Activated naive CD4-positive, alpha-beta T cell treated with anti-CD3 and anti-CD28 coated beads for 36 hours (primary cell): ENCODE measurements at regions of chr5 and their contacts with region 1.

Region 1: GRCh38 chr5:14664302-14665100 is at the start of gene OTULIN:
- DNase-seq: peak; percentile 94
- H3K4me3 Mint-ChIP-seq: peak within 1 kb of the TSS; percentile 96
- H3K27ac Mint-ChIP-seq: peak within 1 kb of the TSS; percentile 97
- H3K4me1 Mint-ChIP-seq: peaks cover 70% of the 10 kb centered on the region
- H3K27me3 Mint-ChIP-seq: no peaks in the 10 kb centered on the region
- total RNA-seq, gene OTULIN: 46.4 to 48.0 TPM

Region 2: DNA sequence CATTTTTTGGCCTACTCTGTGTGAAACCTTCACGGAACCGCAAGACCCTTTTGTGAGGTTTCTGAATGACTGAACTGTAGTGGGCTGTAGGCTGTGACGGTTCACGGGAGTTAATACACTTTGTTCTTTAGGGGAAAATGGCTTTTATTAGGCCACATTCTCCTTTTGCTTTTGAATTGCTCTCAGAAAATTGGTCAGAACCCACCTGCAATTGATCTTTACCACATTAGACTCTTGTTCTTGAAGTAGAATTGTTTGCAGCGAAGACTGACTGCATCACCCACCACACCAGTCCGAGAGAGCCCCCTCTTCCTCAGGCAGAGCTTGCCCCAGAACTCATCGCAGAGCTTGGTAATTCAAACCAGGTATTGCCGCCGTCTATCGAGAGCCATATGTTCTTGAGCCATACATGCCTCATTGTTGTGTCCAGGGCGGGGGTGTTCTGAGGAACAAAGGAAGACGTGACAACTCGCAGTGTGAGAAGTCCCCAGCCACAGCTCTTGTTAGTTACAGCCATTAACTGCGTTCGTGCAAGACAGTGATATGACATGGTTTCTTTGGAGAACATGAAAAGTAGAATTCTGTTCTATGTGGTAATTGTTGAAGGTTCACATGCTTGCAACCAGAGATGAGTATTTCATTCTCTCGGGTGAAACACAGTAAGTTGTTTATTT is 249.3 kb before region 1 on chr5:
- CTCF ChIA-PET with region 1: no interaction called
- intact Hi-C with region 1: loop called (anchors 1 kb)
- DNase-seq: peak; percentile 43
- H3K4me3 Mint-ChIP-seq: peak overlapping the region; percentile 51
- H3K27ac Mint-ChIP-seq: peak overlapping the region; percentile 84
- H3K4me1 Mint-ChIP-seq: peaks cover 50% of the 10 kb centered on the region
- H3K27me3 Mint-ChIP-seq: peaks cover 2% of the 10 kb centered on the region

Region 3: GRCh38 chr5:14595189-14595588 is 69.3 kb before region 1 on chr5:
- CTCF ChIA-PET with region 1: no interaction called
- intact Hi-C with region 1: loop called (anchors 2 kb)
- DNase-seq: peak; percentile 51
- H3K4me3 Mint-ChIP-seq: peak overlapping the region; percentile 68
- H3K27ac Mint-ChIP-seq: peak overlapping the region; percentile 90
- H3K4me1 Mint-ChIP-seq: peaks cover 84% of the 10 kb centered on the region
- H3K27me3 Mint-ChIP-seq: no peaks in the 10 kb centered on the region

Region 4: DNA sequence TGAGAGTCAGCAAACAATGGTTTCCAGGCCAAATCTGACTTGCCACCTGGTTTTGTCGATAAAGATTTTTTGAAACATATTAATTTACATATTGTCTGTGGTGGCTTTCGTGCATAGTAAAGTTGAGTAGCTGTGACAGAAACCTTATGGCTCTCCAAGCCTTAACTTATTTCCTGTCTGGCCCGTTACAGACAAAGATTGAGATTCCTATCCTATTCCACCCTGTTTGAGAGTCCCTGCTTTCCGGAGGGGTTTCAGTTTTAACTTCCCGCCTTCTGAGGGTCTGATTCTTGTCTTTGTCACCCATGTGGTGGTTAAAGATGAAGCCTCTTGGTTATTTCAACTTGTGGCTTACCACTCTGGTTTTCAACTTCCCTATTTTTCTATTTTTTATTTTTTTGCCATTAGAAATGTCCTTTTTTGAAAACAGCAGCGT is 11.4 kb after region 1 on chr5:
- CTCF ChIA-PET with region 1: interaction called, 5 read pairs
- intact Hi-C with region 1: loop called (anchors 1 kb)
- DNase-seq: no peak
- H3K4me3 Mint-ChIP-seq: peak overlapping the region; percentile 16
- H3K27ac Mint-ChIP-seq: peak overlapping the region; percentile 82
- H3K4me1 Mint-ChIP-seq: peaks cover 68% of the 10 kb centered on the region
- H3K27me3 Mint-ChIP-seq: no peaks in the 10 kb centered on the region

Region 5: DNA sequence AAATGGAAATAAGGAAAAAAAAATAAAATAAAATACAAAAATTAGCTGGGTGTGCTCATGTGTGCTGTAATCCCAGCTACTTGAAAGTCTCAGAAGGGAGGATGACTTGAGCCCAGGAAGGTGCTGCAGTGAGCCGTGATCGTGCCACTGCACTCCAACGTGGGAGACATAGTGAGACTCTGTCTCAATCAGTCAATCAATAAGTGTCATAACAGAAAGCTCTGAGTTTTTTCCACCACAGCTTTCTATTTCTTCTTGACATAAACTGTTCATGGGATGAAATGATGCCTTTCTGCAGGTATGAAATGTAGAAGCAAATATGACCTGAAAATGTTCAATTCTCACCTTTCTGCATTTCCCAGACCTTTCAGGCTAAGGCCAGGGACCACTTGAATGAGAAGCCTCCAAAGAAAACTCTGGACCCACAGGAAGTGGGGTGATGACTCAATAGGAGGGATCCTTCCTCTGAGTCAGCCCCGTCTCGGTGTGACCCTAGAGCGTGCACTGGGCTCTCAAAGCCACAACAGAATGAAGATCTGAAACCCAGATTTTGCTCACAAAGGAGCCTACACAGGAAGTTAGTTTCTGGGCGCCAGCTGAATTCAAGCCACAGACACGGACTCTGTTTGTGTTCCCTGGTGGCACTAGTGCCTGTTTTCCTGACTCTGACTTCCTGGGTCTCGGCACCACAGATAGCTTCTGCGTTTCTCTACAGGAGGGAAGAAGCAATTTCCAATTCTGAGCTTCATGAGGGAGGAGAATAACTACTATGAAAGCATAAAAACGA is 145.1 kb after region 1 on chr5:
- CTCF ChIA-PET with region 1: no interaction called
- intact Hi-C with region 1: loop called (anchors 1 kb)
- DNase-seq: peak; percentile 89
- H3K4me3 Mint-ChIP-seq: peak overlapping the region; percentile 55
- H3K27ac Mint-ChIP-seq: peak overlapping the region; percentile 69
- H3K4me1 Mint-ChIP-seq: peaks cover 53% of the 10 kb centered on the region
- H3K27me3 Mint-ChIP-seq: no peaks in the 10 kb centered on the region

Region 6: DNA sequence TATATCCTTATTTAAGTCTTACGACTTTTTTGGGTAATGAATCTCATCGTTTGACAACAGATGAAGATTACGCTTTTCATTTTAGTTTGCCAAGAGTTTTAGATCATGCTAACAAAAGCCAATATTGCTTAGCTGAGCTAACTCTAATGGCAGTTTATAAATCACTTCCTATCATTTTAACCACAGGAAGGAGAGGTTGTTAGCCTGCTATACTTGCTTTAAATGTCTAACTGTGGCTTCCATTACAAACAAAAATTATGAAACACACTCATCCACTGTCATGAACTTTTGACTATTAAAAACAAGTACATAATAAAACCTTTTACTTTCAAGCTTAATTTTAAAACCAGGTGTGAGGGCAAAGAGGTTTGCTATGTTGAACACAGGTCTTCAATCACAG is 260.8 kb after region 1 on chr5:
- CTCF ChIA-PET with region 1: no interaction called
- intact Hi-C with region 1: loop called (anchors 2 kb)
- DNase-seq: no peak
- H3K4me3 Mint-ChIP-seq: peak overlapping the region; percentile 40
- H3K27ac Mint-ChIP-seq: peak overlapping the region; percentile 86
- H3K4me1 Mint-ChIP-seq: peaks cover 58% of the 10 kb centered on the region
- H3K27me3 Mint-ChIP-seq: no peaks in the 10 kb centered on the region

Region 7: DNA sequence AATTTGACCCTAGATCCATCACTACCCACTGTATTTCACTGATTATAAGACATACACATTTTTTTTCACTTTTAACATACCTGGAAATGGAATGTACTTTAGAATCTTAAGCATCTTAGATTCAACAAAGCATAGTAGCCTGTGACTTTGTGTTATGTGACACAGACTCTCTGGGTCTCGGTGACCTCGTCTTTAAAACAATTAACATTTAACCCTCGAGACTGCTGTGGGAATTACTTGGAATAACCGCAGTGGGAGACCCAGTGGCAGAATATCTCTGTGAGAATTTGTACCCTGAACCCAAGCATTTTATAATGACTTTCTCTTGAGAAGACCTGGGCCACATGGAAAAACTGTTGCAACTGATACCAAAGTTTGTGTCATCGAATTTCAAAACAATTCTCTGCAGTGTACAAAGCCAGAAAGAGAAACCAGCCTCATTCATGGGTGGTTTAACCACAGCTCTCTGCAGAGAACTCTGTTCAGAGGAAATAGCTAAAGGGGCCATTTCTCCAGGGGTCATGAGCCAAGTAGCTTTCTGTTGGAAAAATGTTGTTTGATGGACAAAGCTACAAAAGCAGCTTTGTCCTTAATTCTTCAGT is 1962.3 kb after region 1 on chr5:
- CTCF ChIA-PET with region 1: no interaction called
- intact Hi-C with region 1: loop called (anchors 10 kb)
- DNase-seq: peak; percentile 66
- H3K4me3 Mint-ChIP-seq: no peak overlapping the region
- H3K27ac Mint-ChIP-seq: peak overlapping the region; percentile 77
- H3K4me1 Mint-ChIP-seq: peaks cover 46% of the 10 kb centered on the region
- H3K27me3 Mint-ChIP-seq: no peaks in the 10 kb centered on the region